Heart right ventricle (tissue), 16 donors: ENCODE measurements at regions of chr18 and their contacts with region 1.

Region 1: GRCh38 chr18:68887410-68887809 is 89.5 kb downstream of the CCDC102B start:
- DNase-seq: no peak
- ATAC-seq: no peak
- H3K4me3 ChIP-seq: no peak overlapping the region
- H3K27ac ChIP-seq: no peak overlapping the region
- H3K4me1 ChIP-seq: peaks cover 0 to 3% (median 0%) of the 10 kb centered on the region in 9 donors
- H3K27me3 ChIP-seq: no peaks in the 10 kb centered on the region
- CTCF ChIP-seq: no peak

Region 2: GRCh38 chr18:68925268-68925667 is 37.9 kb after region 1 on chr18:
- intact Hi-C with region 1: loop called in 1 of 10 experiments (anchors 2 kb)
- DNase-seq: no peak
- ATAC-seq: no peak
- H3K4me3 ChIP-seq: no peak overlapping the region
- H3K27ac ChIP-seq: no peak overlapping the region
- H3K4me1 ChIP-seq: no peaks in the 10 kb centered on the region
- H3K27me3 ChIP-seq: no peaks in the 10 kb centered on the region
- CTCF ChIP-seq: peak in 6 of 9 donors; percentile 11 to 45 (median 35)